HEK293T (cell line): ENCODE measurements at regions of chr21 and their contacts with region 1.

Region 1: DNA sequence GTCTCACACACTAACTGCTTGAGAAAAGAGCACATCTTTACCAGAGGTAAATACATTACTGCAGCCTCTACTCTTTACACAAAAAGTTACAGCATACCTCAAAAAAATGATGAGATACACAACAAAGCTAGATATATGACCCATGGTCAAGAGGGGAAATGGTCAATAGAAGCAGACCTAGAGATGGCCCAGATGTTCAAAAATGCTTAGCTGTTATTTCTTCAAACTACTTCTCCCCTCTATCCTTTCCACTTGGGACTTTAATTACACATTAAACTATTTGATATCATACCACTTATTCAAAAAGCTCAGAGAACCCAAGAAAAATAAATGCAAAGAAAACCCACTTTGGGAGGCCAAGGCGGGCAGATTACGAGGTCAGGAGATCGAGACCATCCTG is 12.8 kb downstream of the BRWD1 start:
- DNase-seq: no peak

Region 2: GRCh38 chr21:39238275-39238674 is 62.3 kb before region 1 on chr21:
- CTCF ChIA-PET with region 1: no interaction called
- POLR2A ChIA-PET with region 1: no interaction called
- DNase-seq: no peak

Region 3: GRCh38 chr21:39313571-39314142 is 13.1 kb after region 1 on chr21 and contains the start of gene BRWD1:
- CTCF ChIA-PET with region 1: no interaction called
- POLR2A ChIA-PET with region 1: interaction called, 10 read pairs
- DNase-seq: peak; percentile 78

Region 4: DNA sequence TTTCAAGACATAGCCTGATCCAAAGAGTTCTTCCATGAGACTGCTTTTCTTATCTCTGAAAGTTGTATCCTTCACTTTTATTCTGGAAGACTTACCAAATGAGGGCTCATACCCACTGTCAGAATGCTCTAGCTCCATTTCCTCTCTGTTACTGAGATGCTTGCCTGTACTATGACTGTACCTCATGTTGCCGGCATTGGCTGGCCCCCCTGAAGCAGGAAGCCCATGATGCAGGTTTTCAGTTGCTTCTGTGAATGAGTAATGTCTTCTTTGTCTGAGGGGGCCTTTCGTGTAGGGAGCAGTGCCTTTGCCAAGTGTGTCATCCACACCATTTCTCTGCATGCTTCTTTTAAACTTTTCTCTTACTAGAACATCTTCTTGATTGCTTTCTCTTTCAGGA is 105.5 kb after region 1 on chr21:
- CTCF ChIA-PET with region 1: no interaction called
- POLR2A ChIA-PET with region 1: no interaction called
- DNase-seq: no peak

Region 5: GRCh38 chr21:39502631-39503030 is 202.0 kb after region 1 on chr21:
- CTCF ChIA-PET with region 1: no interaction called
- POLR2A ChIA-PET with region 1: no interaction called
- DNase-seq: no peak